Activated CD4-positive, alpha-beta T cell treated with anti-CD3 and anti-CD28 coated beads, Interleukin-2, amount 10 ng/mL, durations not matched to agents 24 days and 14 days (primary cell): ENCODE measurements at regions of chr6 and their contacts with region 1.

Region 1: GRCh38 chr6:128655978-128656498 is 135.6 kb upstream of the PTPRK start:
- DNase-seq: peak; percentile 60
- H3K4me3 Mint-ChIP-seq: peak overlapping the region; percentile 0
- H3K27ac Mint-ChIP-seq: peak overlapping the region; percentile 41
- H3K4me1 Mint-ChIP-seq: peaks cover 22% of the 10 kb centered on the region
- H3K27me3 Mint-ChIP-seq: no peaks in the 10 kb centered on the region

Region 2: DNA sequence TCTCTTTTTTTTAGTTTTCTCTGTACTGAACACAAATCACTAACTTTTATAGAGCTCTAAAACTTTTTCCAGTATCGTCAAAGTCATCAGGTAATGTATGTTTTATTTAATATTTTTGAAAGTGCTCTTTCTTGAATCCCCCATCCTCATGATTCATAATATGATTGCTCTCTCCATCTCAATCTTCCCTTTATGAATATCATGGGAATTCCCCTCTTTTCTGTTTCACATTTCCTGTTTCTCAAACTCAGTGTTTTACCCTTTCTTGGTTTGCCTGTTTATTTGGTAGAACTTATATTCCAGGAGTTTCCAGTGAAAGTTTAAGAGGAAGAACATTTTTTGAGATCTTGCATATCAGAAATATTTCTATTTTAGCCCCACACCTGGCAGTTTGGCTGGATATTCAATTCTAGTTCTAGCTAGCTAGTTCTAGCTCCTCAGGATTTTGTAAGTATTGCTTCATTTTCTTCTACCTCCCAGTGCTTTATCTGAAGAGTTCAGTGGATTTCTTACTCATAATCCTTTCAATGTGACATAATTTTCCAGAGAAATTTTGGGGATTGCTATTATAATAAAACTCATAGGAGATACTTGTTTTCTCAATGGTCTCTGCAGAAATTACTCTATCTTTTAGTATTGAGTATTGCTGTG is 1085.2 kb before region 1 on chr6:
- intact Hi-C with region 1: loop called (anchors 2 kb)
- DNase-seq: no peak
- H3K4me3 Mint-ChIP-seq: no peak overlapping the region
- H3K27ac Mint-ChIP-seq: no peak overlapping the region
- H3K4me1 Mint-ChIP-seq: peaks cover 10% of the 10 kb centered on the region
- H3K27me3 Mint-ChIP-seq: peaks cover 7% of the 10 kb centered on the region

Region 3: DNA sequence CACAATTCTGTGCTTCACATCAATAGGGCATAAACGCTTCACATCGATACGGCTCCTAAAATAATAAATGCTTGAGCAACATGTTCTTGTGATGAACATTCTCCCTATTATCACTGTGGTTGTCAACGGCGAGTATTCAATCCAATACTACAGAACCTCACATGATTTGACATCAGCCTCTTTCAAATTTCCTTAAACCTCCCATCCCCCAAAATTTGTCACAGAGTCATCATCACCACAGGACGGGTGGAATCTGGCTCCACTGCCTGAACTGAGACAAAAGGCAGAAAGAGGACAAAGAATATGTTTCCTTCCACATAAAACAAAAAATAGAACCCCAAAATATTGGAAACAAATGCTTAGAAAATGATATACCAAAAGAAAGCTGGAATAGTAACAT is 762.5 kb before region 1 on chr6:
- intact Hi-C with region 1: loop called (anchors 10 kb)
- DNase-seq: no peak
- H3K4me3 Mint-ChIP-seq: peak overlapping the region; percentile 85
- H3K27ac Mint-ChIP-seq: peak overlapping the region; percentile 91
- H3K4me1 Mint-ChIP-seq: peaks cover 39% of the 10 kb centered on the region
- H3K27me3 Mint-ChIP-seq: no peaks in the 10 kb centered on the region

Region 4: GRCh38 chr6:128098000-128098581 is 557.9 kb before region 1 on chr6:
- intact Hi-C with region 1: loop called (anchors 5 kb)
- DNase-seq: peak; percentile 57
- H3K4me3 Mint-ChIP-seq: no peak overlapping the region
- H3K27ac Mint-ChIP-seq: peak overlapping the region; percentile 64
- H3K4me1 Mint-ChIP-seq: peaks cover 20% of the 10 kb centered on the region
- H3K27me3 Mint-ChIP-seq: no peaks in the 10 kb centered on the region

Region 5: DNA sequence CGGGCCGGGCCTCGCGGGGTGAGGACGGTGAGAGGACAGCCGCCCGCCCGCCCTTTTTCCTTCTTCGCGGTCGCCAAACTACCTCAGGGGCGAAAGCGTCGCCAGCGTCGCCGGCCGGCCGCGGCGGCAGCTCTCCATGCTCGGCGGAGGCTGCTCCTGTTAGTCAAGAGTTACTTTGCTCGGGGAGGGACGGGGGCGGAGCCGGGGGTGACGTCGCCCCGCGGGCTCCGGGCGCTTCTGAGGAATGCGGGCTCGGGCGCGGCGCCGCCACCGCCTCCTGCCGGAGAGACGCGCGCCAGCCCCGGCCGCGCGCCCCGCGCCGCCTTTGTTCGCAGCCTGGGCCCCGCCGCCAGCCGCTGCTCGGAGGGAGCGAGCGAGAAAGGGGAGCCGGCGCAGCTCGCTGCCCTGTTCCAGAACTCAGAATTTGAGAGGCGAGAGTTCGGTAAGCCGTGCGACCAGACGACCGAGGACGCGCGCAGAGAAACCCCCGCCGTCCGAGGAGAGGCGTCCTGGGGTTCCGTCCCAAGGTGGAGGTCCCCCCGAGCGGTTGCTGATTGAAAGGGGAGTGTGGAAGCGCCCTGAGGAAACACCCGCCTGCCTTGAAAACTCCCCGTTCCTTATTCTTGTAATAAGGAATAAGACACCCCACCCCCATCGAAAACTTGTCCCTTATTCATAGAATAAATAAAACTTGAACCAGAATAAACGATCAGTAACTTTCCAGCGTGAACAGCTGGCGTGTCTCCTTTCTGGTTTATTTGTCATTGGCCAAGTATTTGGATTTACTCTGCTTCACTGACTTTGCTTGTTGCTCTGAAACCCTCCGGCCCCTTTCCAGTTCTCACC is 135.4 kb before region 1 on chr6 and contains the start of gene PTPRK:
- intact Hi-C with region 1: loop called (anchors 5 kb)
- DNase-seq: peak; percentile 96
- H3K4me3 Mint-ChIP-seq: peak within 1 kb of the TSS; percentile 96
- H3K27ac Mint-ChIP-seq: peak within 1 kb of the TSS; percentile 84
- H3K4me1 Mint-ChIP-seq: peaks cover 19% of the 10 kb centered on the region
- H3K27me3 Mint-ChIP-seq: peaks cover 75% of the 10 kb centered on the region
- total RNA-seq, gene PTPRK: 3.6 and 5.4 TPM in 2 replicates

Region 6: GRCh38 chr6:128600397-128600951 is 55.6 kb before region 1 on chr6:
- intact Hi-C with region 1: loop called (anchors 5 kb)
- DNase-seq: no peak
- H3K4me3 Mint-ChIP-seq: no peak overlapping the region
- H3K27ac Mint-ChIP-seq: no peak overlapping the region
- H3K4me1 Mint-ChIP-seq: peaks cover 15% of the 10 kb centered on the region
- H3K27me3 Mint-ChIP-seq: no peaks in the 10 kb centered on the region

Region 7: GRCh38 chr6:129490521-129491245 is 834.6 kb after region 1 on chr6:
- intact Hi-C with region 1: loop called (anchors 1 kb)
- DNase-seq: peak; percentile 91
- H3K4me3 Mint-ChIP-seq: peak overlapping the region; percentile 84
- H3K27ac Mint-ChIP-seq: peak overlapping the region; percentile 98
- H3K4me1 Mint-ChIP-seq: peaks cover 61% of the 10 kb centered on the region
- H3K27me3 Mint-ChIP-seq: no peaks in the 10 kb centered on the region